ENCODE measurements at regions of chr17 and their contacts with region 1.

Region 1: GRCh38 chr17:17972126-17972951 is at the starts of genes DRC3 and TOM1L2:
- DNase-seq: peak; percentile 100
- ATAC-seq: peak; percentile 96
- H3K4me3 Mint-ChIP-seq: peak within 1 kb of the TSS; percentile 90
- H3K27ac Mint-ChIP-seq: peak within 1 kb of the TSS; percentile 88
- H3K4me1 Mint-ChIP-seq: peaks cover 27% of the 10 kb centered on the region
- H3K27me3 Mint-ChIP-seq: no peaks in the 10 kb centered on the region
- total RNA-seq, gene DRC3: 0.70 to 0.95 TPM
- total RNA-seq, gene TOM1L2: 22.1 to 25.0 TPM

Region 2: DNA sequence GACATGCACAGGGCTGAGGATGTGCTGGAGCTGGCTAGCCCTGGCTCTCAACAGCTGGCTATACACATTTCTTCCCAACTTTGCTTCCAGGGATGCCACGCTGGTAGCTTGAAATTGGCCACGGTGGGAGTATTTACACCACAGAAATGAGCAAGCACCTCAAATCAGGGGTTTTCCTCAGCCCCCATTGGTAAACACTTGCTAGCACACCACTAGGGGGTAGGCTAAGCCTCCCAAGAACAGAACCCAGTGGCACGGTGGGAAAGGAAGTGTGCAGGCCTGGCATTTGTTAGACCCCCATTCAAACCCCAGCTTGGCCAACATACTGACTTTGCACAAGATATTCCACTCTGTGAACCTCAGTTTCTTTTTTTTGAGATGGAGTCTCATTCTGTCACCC is 13.2 kb after region 1 on chr17:
- CTCF ChIA-PET with region 1: interaction called, 14 read pairs
- POLR2A ChIA-PET with region 1: no interaction called
- DNase-seq: peak; percentile 27
- ATAC-seq: no peak
- H3K4me3 Mint-ChIP-seq: no peak overlapping the region
- H3K27ac Mint-ChIP-seq: no peak overlapping the region
- H3K4me1 Mint-ChIP-seq: no peaks in the 10 kb centered on the region
- H3K27me3 Mint-ChIP-seq: no peaks in the 10 kb centered on the region

Measured in activated CD8-positive, alpha-beta T cell treated with anti-CD3 and anti-CD28 coated beads, Interleukin-2, amount 10 ng/mL, durations not matched to agents 7 days and 5 days (primary cell).